ENCODE measurements at regions of chr15 and their contacts with region 1.

Region 1: GRCh38 chr15:41980654-41981323 is 8.4 kb upstream of the EHD4 start:
- DNase-seq: peak in 2 of 3 donors; percentile 42 to 57
- ATAC-seq: peak; percentile 76 to 88
- H3K4me3 ChIP-seq: no peak overlapping the region
- H3K27ac ChIP-seq: peak overlapping the region; percentile 15
- H3K4me1 ChIP-seq: peaks cover 7% of the 10 kb centered on the region
- H3K27me3 ChIP-seq: no peaks in the 10 kb centered on the region

Region 2: GRCh38 chr15:41827880-41828806 is 152.6 kb before region 1 on chr15 and contains the start of gene JMJD7:
- intact Hi-C with region 1: loop called in 1 of 4 experiments (anchors 5 kb)
- DNase-seq: peak; percentile 96 to 98 (median 97)
- ATAC-seq: peak; percentile 96 to 97
- H3K4me3 ChIP-seq: peak within 1 kb of the TSS; percentile 72
- H3K27ac ChIP-seq: peak within 1 kb of the TSS; percentile 89
- H3K4me1 ChIP-seq: no peaks in the 10 kb centered on the region
- H3K27me3 ChIP-seq: no peaks in the 10 kb centered on the region
- total RNA-seq, gene JMJD7: 8.5 to 17.2 (median 16.2) TPM

Region 3: DNA sequence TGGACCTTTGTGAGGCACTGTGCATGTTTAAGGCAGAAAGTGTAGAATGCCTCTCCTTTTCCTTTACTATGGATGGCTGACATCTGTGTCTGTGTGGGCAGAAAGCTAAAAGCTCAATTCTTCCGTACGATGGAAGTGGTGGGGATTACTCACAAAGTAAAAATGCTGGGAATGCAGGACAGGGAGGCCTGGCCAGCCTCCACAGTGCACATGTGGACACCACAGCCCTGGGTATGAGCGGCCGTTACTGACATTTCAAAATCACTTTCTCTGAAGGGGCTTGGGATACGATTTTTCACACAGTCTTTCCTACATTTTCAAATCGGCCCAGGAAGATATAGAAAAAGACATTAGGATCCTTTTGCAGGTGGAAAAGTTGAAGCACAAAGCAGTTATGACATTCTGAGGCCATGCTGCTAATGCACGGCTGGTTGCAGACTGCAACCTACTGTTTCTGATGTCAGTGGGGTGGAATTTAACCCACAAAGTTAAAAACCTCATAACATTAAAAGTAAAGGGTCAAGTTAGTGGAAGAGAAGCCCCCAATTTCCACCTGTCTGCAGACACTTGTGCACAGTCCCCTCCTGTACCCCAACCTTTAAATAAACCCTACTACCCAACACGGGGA is 36.4 kb before region 1 on chr15:
- intact Hi-C with region 1: no loop called
- DNase-seq: peak in 2 of 3 donors; percentile 53 to 80
- ATAC-seq: peak; percentile 63 to 77
- H3K4me3 ChIP-seq: no peak overlapping the region
- H3K27ac ChIP-seq: peak overlapping the region; percentile 74
- H3K4me1 ChIP-seq: peaks cover 24% of the 10 kb centered on the region
- H3K27me3 ChIP-seq: no peaks in the 10 kb centered on the region